Endothelial cell of umbilical vein (primary cell): ENCODE measurements at regions of chr7 and their contacts with region 1.

Region 1: DNA sequence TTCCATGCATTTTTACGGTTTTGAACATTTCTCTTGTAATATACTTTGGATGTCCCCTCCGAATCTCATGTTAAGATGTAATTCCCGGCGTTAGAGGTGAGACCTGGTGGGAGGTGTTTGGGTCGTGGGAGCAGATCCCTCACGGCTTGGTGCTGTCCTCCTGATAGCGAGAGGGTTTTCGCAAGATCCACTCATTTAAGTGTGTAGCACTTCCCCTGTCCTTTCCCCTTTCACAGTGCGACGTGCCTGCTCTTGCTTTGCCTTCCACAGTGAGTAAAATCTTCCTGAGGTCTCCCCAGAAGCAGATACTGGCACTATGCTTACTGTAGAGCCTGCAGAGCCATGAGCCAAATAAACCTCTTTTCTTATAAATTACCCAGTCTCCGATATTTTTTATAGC is 6.6 kb downstream of the GPR141 start:
- DNase-seq: no peak
- H3K4me3 ChIP-seq: no peak overlapping the region
- H3K27ac ChIP-seq: no peak overlapping the region
- H3K4me1 ChIP-seq: no peaks in the 10 kb centered on the region
- H3K27me3 ChIP-seq: no peaks in the 10 kb centered on the region
- CTCF ChIP-seq: no peak
- POLR2A ChIP-seq: no peak

Region 2: DNA sequence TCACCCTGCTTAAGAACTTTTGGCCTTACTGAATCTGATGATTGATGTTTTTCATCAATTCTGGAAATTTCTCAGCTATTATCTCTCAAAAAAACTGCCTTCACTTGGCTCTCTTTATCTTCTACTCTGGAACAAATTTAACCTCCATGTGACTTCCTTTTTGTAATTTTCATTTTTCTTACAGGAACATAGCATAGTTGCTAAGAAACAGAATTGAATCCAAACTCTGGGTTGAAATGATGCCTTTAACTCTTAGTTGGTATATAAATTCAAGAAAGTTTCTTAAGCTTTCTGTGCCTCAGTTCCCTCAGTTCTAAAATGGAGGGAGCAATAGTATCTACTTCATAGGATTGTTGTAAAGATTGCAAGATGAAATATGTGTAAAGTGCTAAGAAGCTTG is 13.2 kb after region 1 on chr7:
- CTCF ChIA-PET with region 1: no interaction called
- POLR2A ChIA-PET with region 1: no interaction called
- dilution Hi-C with region 1: no loop called
- intact Hi-C with region 1: loop called (anchors 1 kb)
- DNase-seq: no peak
- H3K4me3 ChIP-seq: no peak overlapping the region
- H3K27ac ChIP-seq: no peak overlapping the region
- H3K4me1 ChIP-seq: no peaks in the 10 kb centered on the region
- H3K27me3 ChIP-seq: no peaks in the 10 kb centered on the region
- CTCF ChIP-seq: no peak
- POLR2A ChIP-seq: no peak